CD4-positive, alpha-beta memory T cell (primary cell): ENCODE measurements at regions of chr1 and their contacts with region 1.

Region 1: GRCh38 chr1:97814121-97814520 is 106.7 kb downstream of the DPYD start:
- DNase-seq: no peak
- H3K4me3 ChIP-seq: no peak overlapping the region
- H3K4me3 Mint-ChIP-seq: no peak overlapping the region
- H3K27ac ChIP-seq: no peak overlapping the region
- H3K27ac Mint-ChIP-seq: peak overlapping the region in 2 of 7 donors; percentile 20 to 68
- H3K4me1 ChIP-seq: no peaks in the 10 kb centered on the region
- H3K4me1 Mint-ChIP-seq: peaks cover 5 to 12% (median 10%) of the 10 kb centered on the region in 4 donors
- H3K27me3 ChIP-seq: no peaks in the 10 kb centered on the region
- H3K27me3 Mint-ChIP-seq: no peaks in the 10 kb centered on the region

Region 2: DNA sequence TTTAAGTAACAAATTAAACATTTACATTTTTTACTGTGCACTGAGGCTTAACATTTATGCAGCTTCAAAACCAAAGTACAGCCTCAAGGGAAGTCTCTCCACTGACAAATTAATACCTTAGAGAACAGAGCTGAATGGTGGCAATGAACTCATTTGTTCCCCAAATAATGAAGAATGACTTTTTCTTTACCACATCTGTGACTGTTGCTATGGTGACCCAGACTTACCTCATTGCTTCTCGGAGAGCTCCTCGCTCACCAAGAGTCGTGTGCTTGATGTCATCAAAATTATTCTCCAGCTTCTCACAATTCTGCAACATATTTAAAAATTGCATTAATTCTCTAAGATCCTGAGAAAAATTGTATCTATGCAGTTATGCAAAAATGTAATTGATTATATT is 13.8 kb after region 1 on chr1:
- CTCF ChIA-PET with region 1: no interaction called
- POLR2A ChIA-PET with region 1: interaction called, 3 read pairs
- intact Hi-C with region 1: loop called (anchors 2 kb)
- DNase-seq: no peak
- H3K4me3 ChIP-seq: no peak overlapping the region
- H3K4me3 Mint-ChIP-seq: no peak overlapping the region
- H3K27ac ChIP-seq: no peak overlapping the region
- H3K27ac Mint-ChIP-seq: no peak overlapping the region
- H3K4me1 ChIP-seq: no peaks in the 10 kb centered on the region
- H3K4me1 Mint-ChIP-seq: peaks cover 0 to 7% (median 5%) of the 10 kb centered on the region in 4 donors
- H3K27me3 ChIP-seq: no peaks in the 10 kb centered on the region
- H3K27me3 Mint-ChIP-seq: no peaks in the 10 kb centered on the region

Region 3: GRCh38 chr1:97864615-97865014 is 50.5 kb after region 1 on chr1:
- CTCF ChIA-PET with region 1: no interaction called
- POLR2A ChIA-PET with region 1: no interaction called
- intact Hi-C with region 1: loop called (anchors 5 kb)
- DNase-seq: no peak
- H3K4me3 ChIP-seq: no peak overlapping the region
- H3K4me3 Mint-ChIP-seq: peak overlapping the region in 3 of 8 donors; percentile 3 to 16 (median 10)
- H3K27ac ChIP-seq: no peak overlapping the region
- H3K27ac Mint-ChIP-seq: peak overlapping the region in 1 of 7 donors; percentile 65
- H3K4me1 ChIP-seq: peaks cover 5% of the 10 kb centered on the region
- H3K4me1 Mint-ChIP-seq: peaks cover 21 to 34% (median 25%) of the 10 kb centered on the region in 4 donors
- H3K27me3 ChIP-seq: no peaks in the 10 kb centered on the region
- H3K27me3 Mint-ChIP-seq: no peaks in the 10 kb centered on the region